K562 (cell line): ENCODE measurements at regions of chr11 and their contacts with region 1.

Region 1: DNA sequence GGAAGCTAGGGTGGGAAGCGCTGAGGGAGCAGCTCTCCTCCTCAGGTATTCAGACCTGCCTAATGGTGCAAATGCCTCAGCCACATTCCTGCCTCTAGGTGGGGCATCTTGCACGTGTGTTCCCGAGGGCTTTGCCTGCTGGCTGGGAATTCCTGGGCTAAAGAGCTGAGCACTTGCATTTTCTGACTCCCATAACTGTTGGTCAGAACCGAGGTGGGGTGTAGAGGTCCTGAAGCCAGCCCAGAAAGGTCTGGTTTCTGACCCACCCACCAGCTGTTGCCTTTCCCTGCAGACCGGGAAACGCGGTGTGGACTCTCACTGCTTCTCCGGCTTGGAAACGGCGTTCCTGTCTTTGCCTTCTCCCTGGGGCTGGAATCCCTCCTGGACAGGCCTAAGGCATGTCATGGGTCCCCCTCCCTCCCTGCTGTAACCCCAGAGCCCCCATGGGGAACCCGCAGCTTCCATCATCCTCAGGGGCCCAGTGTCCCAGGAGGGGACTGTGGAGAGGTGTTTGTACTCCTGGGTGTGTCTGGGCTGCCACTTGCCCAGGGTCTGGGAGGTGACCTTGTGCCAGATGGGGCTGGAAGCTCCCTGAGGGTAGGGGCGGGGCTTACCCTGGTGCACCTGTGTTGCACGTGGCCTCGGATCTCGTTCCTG is 24.0 kb upstream of the SMIM38 start:
- DNase-seq: peak; percentile 59 to 72 (median 62)
- ATAC-seq: peak; percentile 91
- H3K4me3 ChIP-seq: no peak overlapping the region
- H3K27ac ChIP-seq: no peak overlapping the region
- H3K4me1 ChIP-seq: peaks cover 3 to 6% of the 10 kb centered on the region in 2 experiments; a peak in 2 of 5 replicates
- H3K27me3 ChIP-seq: peaks cover 0 to 8% of the 10 kb centered on the region in 2 experiments; a peak in 3 of 5 replicates
- CTCF ChIP-seq: peak; percentile 77 to 89 (median 86)
- EP300 ChIP-seq: no peak
- POLR2A ChIP-seq: no peak
- RAD21 ChIP-seq: peak; percentile 66 to 84

Region 2: GRCh38 chr11:69115586-69116560 is 15.9 kb before region 1 on chr11:
- CTCF ChIA-PET with region 1: no interaction called
- POLR2A ChIA-PET with region 1: no interaction called
- in situ Hi-C with region 1: no loop called
- intact Hi-C with region 1: no loop called
- DNase-seq: peak in 2 of 4 experiments; percentile 32 to 36
- ATAC-seq: peak; percentile 29; the same call in 1 of the 3 replicates
- H3K4me3 ChIP-seq: no peak overlapping the region
- H3K27ac ChIP-seq: no peak overlapping the region
- H3K4me1 ChIP-seq: peaks cover 0 to 13% of the 10 kb centered on the region in 2 experiments; a peak in 2 of 5 replicates
- H3K27me3 ChIP-seq: peaks cover 47 to 86% of the 10 kb centered on the region in 2 experiments
- CTCF ChIP-seq: no peak
- EP300 ChIP-seq: no peak
- POLR2A ChIP-seq: no peak
- RAD21 ChIP-seq: no peak

Region 3: DNA sequence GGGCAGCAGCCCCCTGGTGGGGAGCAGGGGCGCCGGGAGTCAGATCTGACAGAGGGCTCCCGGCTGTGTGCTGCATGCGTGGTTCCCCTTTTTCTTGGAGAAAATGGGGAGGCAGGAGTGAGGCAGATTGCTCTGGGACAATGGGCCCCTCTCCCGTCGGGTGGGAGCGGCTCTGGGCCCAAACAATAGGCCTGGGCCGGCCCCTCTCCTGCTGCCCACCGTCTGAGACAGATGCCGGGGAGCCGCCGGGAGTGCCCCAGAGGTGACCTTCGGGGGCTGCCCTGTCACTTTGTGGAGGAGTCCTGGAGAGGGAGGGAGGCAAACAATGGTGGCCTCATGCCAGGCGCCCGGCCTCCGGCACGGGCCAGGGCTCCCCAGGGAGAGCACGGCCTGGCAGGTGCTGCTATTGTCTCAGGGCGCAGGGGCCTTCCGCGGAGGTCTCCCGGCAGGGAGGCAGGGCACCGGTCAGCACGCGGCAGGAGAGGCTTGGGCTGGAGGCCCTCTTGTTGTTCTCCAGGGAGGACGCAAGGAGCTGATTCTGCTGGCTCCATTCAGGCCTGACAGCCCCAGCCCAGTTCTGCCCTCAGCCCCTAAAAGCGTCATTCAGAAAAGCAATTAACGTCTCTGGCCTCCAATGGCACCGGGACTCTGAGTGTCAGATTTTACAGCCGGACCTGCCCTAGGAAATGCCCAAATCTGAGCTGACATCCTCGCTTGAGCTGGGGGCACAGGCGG is 68.7 kb after region 1 on chr11:
- CTCF ChIA-PET with region 1: no interaction called
- POLR2A ChIA-PET with region 1: no interaction called
- in situ Hi-C with region 1: no loop called
- intact Hi-C with region 1: no loop called
- DNase-seq: no peak
- ATAC-seq: no peak
- H3K4me3 ChIP-seq: no peak overlapping the region
- H3K27ac ChIP-seq: no peak overlapping the region
- H3K4me1 ChIP-seq: peaks cover 0 to 12% of the 10 kb centered on the region in 2 experiments; a peak in 2 of 5 replicates
- H3K27me3 ChIP-seq: peaks cover 40 to 80% of the 10 kb centered on the region in 2 experiments
- CTCF ChIP-seq: no peak
- EP300 ChIP-seq: no peak
- POLR2A ChIP-seq: no peak
- RAD21 ChIP-seq: no peak

Region 4: GRCh38 chr11:69211920-69212571 is 80.3 kb after region 1 on chr11:
- CTCF ChIA-PET with region 1: no interaction called
- POLR2A ChIA-PET with region 1: no interaction called
- in situ Hi-C with region 1: no loop called
- intact Hi-C with region 1: loop called (anchors 10 kb)
- DNase-seq: peak in 1 of 4 experiments; percentile 15
- ATAC-seq: no peak
- H3K4me3 ChIP-seq: no peak overlapping the region
- H3K27ac ChIP-seq: no peak overlapping the region
- H3K4me1 ChIP-seq: peaks cover 14 to 19% of the 10 kb centered on the region in 2 experiments
- H3K27me3 ChIP-seq: peaks cover 2 to 32% of the 10 kb centered on the region in 2 experiments; a peak in 3 of 5 replicates
- CTCF ChIP-seq: peak; percentile 23 to 40 (median 31); a peak in 4 of 6 replicates
- EP300 ChIP-seq: no peak
- POLR2A ChIP-seq: no peak
- RAD21 ChIP-seq: peak in 1 of 2 experiments; percentile 23; a peak in 1 of 4 replicates